ENCODE measurements at regions of chr1 and their contacts with region 1.

Region 1: GRCh38 chr1:247373721-247374141 is 42.1 kb upstream of the ZNF496 start:
- DNase-seq: no peak
- H3K4me3 ChIP-seq: no peak overlapping the region
- CTCF ChIP-seq: peak; percentile 49

Region 2: DNA sequence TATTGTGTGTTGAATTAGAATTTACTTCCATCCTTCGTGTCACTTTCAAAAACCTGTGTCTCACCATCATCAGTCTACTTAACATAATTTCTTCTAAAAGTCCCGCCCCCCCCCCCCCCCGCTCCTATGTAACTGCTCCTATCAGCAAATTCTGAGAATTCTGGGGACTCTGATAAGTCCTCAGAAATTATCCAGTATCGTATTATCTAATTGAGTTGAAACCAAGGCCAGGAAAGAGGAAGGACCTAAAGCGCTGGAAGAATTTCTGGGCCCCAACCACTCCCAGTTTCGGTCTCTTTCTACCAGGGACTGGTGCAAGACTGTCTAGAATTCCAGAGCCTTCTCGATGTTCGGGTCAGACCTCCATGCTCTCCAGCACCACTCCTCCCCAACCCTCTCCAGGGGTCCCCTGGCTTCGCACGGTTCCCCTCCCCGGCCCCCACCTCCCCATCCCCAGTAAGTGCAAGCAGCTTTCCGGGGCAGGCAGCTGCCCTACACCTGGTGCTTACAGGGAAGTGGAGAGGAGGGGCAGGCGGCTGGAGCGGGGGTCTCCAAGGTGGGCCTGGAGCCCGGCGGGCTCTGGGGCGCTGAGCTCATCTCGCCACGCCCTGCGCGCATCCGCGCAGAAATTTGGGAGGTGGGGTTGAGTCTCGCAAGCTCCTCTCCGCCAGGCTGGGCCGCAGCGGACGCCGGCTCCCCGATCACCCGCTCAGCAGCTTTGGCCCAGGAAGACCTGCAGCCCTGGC is 26.1 kb before region 1 on chr1:
- CTCF ChIA-PET with region 1: no interaction called
- POLR2A ChIA-PET with region 1: no interaction called
- DNase-seq: no peak
- H3K4me3 ChIP-seq: no peak overlapping the region
- CTCF ChIP-seq: no peak

Region 3: DNA sequence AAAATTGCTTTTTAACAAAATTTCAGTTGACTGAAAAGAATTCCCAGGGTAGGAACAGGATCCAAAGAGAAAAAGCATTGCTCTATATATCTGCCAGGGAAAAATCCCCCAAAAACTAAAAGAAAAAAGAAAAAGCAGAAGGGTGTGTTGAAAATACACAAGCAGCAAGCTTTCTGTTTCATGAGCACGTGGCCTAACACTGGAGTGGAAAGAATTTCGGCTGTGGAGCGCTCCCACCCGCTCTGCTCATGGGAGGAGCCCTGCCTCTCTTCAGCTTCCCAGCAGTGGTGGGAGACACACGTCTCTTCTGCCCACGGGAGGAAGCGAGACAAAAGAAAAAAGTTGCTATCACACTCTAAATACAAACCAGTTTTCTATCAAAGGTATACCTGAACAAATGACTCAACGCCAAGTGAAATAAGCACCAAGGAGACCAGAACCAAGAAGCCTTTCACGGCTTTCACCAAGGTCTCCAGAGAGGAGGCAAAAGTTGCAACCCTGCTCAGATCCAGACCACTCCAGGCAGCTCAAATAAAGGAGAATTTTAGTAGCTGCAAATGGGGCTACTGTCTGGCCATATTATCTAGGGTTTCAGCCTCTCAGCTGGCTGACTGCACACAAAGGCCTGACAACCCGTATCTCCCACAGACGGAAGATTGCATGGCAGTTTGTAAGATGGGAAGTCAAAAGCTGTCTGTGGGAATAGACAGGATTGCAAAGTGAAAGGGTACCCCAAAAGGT is 12.6 kb before region 1 on chr1:
- CTCF ChIA-PET with region 1: interaction called, 17 read pairs
- POLR2A ChIA-PET with region 1: no interaction called
- DNase-seq: no peak
- H3K4me3 ChIP-seq: no peak overlapping the region
- CTCF ChIP-seq: no peak

Region 4: GRCh38 chr1:247390116-247390791 is 16.5 kb after region 1 on chr1:
- CTCF ChIA-PET with region 1: interaction called, 38 read pairs
- POLR2A ChIA-PET with region 1: no interaction called
- DNase-seq: no peak
- H3K4me3 ChIP-seq: peak overlapping the region; percentile 15; the same call in 1 of the 2 replicates
- CTCF ChIP-seq: peak; percentile 85

Region 5: DNA sequence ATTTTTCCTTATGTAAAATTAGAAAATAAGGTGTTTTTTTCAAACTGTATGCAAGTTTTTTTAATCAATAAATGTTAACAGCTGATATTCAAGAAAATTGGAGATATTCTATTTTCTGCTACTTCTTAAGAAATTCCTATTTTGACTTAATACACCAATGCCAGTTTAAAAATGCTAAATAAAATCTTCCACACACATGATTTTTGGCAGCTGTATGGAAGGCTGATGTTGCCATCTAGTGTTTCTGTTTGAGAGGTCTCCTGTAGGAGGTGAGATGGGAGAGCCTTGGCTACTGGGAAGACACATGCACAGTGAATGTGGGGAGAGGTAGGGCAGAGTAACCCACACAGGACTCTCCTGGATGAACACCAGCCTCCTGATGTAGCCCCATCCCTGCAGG is 113.3 kb after region 1 on chr1:
- CTCF ChIA-PET with region 1: interaction called, 20 read pairs
- POLR2A ChIA-PET with region 1: no interaction called
- DNase-seq: no peak
- H3K4me3 ChIP-seq: no peak overlapping the region
- CTCF ChIP-seq: no peak

Measured in AG04449 (cell line).